Sigmoid colon (tissue), 7 donors: ENCODE measurements at regions of chr16 and their contacts with region 1.

Region 1: GRCh38 chr16:88442727-88443576 is 10.1 kb upstream of the ZFPM1 start:
- DNase-seq: peak; percentile 85
- H3K4me3 ChIP-seq: no peak overlapping the region
- H3K27ac ChIP-seq: no peak overlapping the region
- H3K4me1 ChIP-seq: peaks cover 0 to 7% (median 6%) of the 10 kb centered on the region in 4 donors
- H3K27me3 ChIP-seq: peaks cover 0 to 23% (median 19%) of the 10 kb centered on the region in 3 donors
- CTCF ChIP-seq: peak; percentile 82 to 98 (median 90)
- EP300 ChIP-seq: no peak
- POLR2A ChIP-seq: no peak

Region 2: GRCh38 chr16:88468275-88469141 is 25.6 kb after region 1 on chr16:
- intact Hi-C with region 1: no loop called
- DNase-seq: no peak
- H3K4me3 ChIP-seq: no peak overlapping the region
- H3K27ac ChIP-seq: no peak overlapping the region
- H3K4me1 ChIP-seq: no peaks in the 10 kb centered on the region
- H3K27me3 ChIP-seq: peaks cover 0 to 22% (median 0%) of the 10 kb centered on the region in 3 donors
- CTCF ChIP-seq: no peak
- EP300 ChIP-seq: no peak
- POLR2A ChIP-seq: no peak

Region 3: GRCh38 chr16:88516601-88517061 is 73.7 kb after region 1 on chr16:
- intact Hi-C with region 1: no loop called
- DNase-seq: no peak
- H3K4me3 ChIP-seq: no peak overlapping the region
- H3K27ac ChIP-seq: no peak overlapping the region
- H3K4me1 ChIP-seq: no peaks in the 10 kb centered on the region
- H3K27me3 ChIP-seq: peaks cover 0 to 96% (median 74%) of the 10 kb centered on the region in 3 donors
- CTCF ChIP-seq: no peak
- EP300 ChIP-seq: no peak
- POLR2A ChIP-seq: no peak

Region 4: GRCh38 chr16:88527186-88527936 is 84.4 kb after region 1 on chr16:
- intact Hi-C with region 1: loop called (anchors 1 kb)
- DNase-seq: peak; percentile 84
- H3K4me3 ChIP-seq: no peak overlapping the region
- H3K27ac ChIP-seq: no peak overlapping the region
- H3K4me1 ChIP-seq: peaks cover 0 to 30% (median 15%) of the 10 kb centered on the region in 4 donors
- H3K27me3 ChIP-seq: peaks cover 8 to 32% (median 28%) of the 10 kb centered on the region in 3 donors
- CTCF ChIP-seq: peak; percentile 41 to 86 (median 72)
- EP300 ChIP-seq: no peak
- POLR2A ChIP-seq: no peak

Region 5: DNA sequence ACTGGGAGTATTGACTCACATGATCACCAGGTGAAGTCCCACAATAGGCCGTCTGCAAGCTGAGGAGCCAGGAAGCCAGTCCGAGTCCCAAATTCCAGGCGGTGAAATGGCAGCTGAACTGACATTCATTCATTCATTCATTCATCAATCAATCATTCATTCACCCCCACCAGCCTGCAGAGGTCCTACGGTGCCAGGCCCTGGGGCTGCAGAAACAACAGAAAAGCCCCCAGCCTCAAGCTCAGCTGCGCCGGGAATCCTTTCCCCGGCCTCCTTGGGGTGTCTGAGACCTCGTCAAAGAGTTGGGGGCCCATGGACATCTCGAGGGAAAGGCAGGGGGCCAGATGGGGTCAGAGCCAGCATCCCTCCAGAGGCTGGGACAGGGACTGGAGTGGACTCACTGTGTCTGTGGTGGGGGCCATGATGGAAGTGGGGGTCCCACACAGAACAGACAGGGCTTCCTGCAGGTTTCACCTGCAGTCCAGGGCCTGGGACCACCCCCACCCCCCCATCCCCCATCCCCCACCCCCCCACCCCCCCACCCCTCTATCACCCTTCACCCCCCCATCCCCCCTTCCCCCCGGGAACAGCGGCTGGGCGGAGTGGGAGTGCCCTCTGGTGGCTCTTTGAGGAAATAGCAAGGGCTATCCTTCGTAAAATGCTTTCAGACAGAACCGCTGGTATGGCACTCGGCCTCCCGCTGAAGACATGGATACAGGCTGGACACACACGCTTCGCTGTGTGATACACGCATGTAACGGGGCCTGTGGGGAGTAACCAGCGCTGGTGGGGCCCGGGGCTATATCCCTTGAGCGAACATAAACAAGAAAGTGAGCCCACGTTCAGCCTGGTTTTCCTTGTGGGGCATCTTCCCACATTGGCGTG is 118.8 kb after region 1 on chr16:
- intact Hi-C with region 1: loop called (anchors 1 kb)
- DNase-seq: no peak
- H3K4me3 ChIP-seq: peak overlapping the region in 3 of 4 donors; percentile 11 to 42 (median 36)
- H3K27ac ChIP-seq: no peak overlapping the region
- H3K4me1 ChIP-seq: peaks cover 0 to 12% (median 8%) of the 10 kb centered on the region in 4 donors
- H3K27me3 ChIP-seq: peaks cover 0 to 27% (median 0%) of the 10 kb centered on the region in 3 donors
- CTCF ChIP-seq: peak in 3 of 4 experiments; percentile 15 to 57 (median 46)
- EP300 ChIP-seq: no peak
- POLR2A ChIP-seq: no peak

Region 6: DNA sequence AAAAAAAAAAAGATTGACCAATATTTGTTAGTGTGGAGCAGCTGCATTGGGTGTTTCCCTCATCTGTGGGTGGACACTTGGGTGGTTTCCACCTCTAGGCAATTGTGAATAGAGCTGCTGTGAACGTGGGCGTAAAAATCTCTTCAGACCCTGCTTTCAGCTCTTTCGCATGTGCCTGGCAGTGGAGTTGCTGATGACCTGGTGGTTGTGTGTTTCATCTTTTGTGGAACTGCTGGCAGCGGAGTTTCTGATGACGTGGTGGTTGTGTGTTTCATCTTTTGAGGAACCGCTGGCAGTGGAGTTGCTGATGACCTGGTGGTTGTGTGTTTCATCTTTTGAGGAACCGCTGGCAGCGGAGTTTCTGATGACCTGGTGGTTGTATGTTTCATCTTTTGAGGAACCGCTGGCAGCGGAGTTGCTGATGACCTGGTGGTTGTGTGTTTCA is 148.6 kb after region 1 on chr16:
- intact Hi-C with region 1: no loop called
- DNase-seq: peak; percentile 74
- H3K4me3 ChIP-seq: no peak overlapping the region
- H3K27ac ChIP-seq: no peak overlapping the region
- H3K4me1 ChIP-seq: no peaks in the 10 kb centered on the region
- H3K27me3 ChIP-seq: no peaks in the 10 kb centered on the region
- CTCF ChIP-seq: no peak
- EP300 ChIP-seq: no peak
- POLR2A ChIP-seq: no peak

Region 7: DNA sequence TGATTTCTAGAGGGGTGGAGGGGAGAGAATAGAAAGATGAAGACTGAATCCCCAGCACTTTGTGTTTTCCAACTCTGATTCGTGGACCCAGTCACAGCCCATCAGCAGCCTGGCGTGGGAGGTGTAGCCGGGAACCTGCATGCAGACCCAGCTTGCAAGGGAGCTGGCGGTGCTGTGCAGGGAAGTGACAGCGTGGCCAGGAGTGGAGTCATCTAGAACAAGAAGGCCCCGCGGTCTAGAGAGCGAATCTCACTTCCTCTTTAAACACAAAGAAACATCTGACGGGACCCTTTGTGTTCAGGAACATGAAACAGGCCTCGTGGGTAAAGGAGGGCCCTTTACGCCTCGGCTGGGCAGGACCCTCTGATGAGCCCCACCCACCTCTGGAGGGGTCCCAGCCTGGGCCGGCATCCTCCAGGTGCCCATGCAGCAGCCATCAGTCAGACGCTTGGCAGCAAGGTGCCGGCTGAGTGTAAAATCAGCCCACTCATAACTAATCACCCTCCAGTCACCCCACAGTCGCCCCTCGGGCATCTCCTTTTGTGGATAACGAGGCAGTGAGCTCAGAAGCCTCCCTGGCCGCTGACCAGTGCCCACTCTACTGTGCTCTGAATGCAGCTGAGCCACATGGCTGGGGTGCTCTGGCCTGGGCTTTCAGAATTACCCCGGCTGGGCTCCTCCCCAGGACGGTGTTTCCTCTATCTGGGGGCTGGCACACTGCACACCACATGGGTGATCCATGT is 238.9 kb after region 1 on chr16:
- intact Hi-C with region 1: no loop called
- DNase-seq: no peak
- H3K4me3 ChIP-seq: no peak overlapping the region
- H3K27ac ChIP-seq: peak overlapping the region in 3 of 4 donors; percentile 25 to 42 (median 34)
- H3K4me1 ChIP-seq: peaks cover 0 to 23% (median 15%) of the 10 kb centered on the region in 4 donors
- H3K27me3 ChIP-seq: peaks cover 35 to 93% (median 66%) of the 10 kb centered on the region in 3 donors
- CTCF ChIP-seq: no peak
- EP300 ChIP-seq: no peak
- POLR2A ChIP-seq: no peak